Right ventricle myocardium superior (tissue), 1 donor: ENCODE measurements at regions of chr4 and their contacts with region 1.

Region 1: DNA sequence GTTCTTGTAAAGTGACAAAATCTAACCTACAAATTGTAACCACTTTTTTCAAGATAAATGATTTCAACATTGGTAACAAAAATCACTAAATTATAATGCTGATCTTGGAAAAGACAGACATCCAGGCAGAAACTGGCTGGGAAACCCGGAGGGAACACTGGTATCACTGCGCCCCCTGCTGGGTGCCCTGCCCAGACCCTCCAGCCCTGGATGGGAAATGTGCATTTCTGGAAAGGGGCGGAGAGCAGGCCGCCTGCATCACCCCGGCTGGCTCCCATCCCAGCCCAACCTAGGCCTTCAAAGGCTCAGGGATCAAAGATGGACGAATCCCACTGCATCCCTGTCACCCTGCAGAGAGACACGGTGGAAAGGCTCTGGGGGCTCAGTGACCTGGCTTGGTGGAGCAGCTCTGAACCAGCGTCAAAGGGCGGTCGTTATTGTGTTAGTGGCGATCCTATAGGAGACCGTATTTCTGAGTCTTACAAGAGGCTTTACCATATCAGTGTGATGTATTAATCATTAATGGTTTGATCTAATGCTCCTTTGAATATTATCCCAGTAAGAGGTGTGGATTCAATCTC is 37.3 kb downstream of the ACOX3 start:
- DNase-seq: peak; percentile 93
- ATAC-seq: peak; percentile 88

Region 2: DNA sequence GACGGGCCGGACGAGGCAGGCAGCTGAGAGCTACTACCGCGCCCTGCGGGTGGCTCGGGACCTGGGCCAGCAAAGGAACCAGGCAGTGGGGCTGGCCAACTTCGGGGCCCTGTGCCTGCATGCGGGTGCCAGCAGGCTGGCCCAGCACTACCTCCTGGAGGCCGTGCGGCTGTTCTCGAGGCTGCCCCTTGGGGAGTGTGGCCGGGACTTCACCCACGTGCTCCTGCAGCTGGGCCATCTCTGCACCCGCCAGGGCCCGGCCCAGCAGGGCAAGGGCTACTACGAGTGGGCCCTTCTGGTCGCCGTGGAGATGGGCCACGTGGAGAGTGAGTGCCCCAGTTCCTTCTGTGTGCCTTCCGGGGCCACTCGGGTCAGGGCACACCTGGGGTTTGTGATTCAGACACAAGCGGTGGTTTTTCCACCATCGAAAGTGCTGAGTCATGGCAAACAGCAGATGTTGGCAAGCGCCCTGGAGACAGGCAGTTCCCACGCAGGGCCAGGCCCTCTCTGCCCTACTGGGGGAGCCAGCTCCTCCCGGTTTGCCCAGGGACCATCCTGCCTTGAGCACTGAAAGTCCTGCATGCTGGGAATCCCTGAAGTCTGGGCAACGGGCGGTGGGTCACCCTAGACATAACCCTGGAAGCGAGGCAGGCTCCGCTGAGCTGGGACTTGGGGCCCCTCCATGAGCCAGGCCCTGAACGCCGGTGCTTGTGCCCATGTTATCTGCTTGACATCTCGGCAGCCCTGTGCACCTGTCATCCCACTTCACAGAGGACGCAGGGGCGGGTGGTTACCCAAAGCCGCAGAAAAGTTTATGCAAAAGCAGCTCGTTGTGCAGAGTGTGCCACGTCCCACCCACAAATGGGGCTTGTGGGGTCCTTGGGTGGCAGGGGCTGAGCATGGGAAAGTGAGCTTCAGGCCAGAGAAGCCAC is 174.7 kb before region 1 on chr4:
- intact Hi-C with region 1: no loop called
- DNase-seq: peak; percentile 78
- ATAC-seq: peak; percentile 76

Region 3: DNA sequence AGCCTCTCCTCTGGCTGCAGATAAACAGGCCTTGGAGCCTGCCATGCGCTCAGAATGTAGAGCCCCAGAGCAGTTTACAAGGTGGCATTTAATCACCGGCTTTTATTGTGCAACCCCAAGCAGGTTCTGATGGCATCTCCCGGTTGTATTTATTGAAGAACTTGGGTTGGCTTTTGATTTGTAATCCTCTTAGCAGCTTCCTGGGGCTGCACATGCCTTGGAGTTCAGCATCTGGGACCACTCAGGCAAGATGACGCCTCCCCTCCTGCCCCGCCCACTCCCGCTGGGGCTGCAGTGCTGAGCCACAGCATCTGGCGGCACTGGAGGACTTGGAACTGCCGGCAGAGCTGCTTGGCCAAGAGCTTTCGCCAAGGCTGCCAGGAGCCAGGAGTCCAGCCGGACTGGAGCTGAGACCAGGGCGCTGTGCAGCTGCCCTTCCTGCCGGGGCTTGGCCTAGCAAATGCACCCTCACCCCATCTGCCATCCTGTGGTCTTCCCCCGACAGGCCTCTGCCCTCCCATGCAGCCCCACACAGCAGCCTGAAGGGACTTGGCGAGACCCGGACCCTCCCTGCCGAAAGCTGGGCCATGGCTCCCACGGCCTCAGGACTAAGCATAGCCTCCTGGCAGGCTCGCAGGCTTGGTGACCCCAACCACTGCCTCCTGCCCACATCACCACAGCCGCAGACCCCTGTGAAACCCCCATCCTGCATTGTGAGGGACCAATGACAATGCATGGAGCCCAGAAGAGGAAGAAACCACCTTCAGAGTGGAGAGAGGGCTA is 128.3 kb before region 1 on chr4:
- intact Hi-C with region 1: loop called (anchors 2 kb)
- DNase-seq: peak; percentile 95
- ATAC-seq: peak; percentile 73

Region 4: DNA sequence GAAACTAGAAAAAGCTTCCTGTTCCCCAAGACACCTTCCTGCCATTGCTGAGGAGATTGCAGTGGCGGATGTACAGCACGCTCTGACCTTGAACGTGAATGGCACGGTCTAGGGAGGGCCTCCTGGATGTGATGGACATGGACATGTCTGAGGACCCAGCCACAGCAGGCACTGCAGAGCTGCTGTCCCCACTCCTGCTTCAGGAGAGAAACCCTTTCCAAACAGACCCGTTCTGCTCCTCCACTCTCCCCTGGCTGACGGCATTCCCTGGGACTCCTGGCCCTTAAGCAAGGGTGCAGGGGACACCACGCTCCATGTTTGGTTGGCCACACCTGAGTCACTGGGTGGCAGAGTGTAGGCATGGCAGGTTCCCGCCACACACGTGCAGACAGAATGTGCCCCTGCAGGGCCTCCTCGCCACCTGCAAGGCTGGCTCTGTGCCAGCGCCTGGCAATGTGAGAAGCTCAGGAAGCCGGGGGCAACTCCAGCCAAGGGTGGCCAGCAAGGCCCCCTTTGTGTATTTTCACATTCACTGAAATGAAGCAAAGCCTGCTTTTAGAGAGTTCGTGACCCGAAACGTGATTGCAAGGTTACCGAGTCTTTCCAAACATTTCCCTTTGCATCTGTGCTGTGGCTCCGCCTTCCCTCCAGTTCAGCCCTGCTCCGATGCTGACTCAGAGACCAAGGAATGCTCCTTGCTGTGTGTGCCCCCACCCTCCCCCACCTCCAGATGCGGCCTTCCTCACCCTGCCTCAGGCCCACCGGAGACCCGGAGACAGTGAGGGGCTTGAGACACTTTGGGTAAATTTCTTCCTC is 87.6 kb before region 1 on chr4:
- intact Hi-C with region 1: loop called (anchors 5 kb)
- DNase-seq: peak; percentile 56
- ATAC-seq: peak; percentile 28